AG04450 (cell line): ENCODE measurements at regions of chr17 and their contacts with region 1.

Region 1: GRCh38 chr17:57243171-57243948 is 13.0 kb upstream of the MSI2 start:
- DNase-seq: peak; percentile 21
- H3K4me3 ChIP-seq: no peak overlapping the region
- H3K27ac ChIP-seq: no peak overlapping the region
- H3K27me3 ChIP-seq: peaks cover 17% of the 10 kb centered on the region
- CTCF ChIP-seq: peak; percentile 100

Region 2: DNA sequence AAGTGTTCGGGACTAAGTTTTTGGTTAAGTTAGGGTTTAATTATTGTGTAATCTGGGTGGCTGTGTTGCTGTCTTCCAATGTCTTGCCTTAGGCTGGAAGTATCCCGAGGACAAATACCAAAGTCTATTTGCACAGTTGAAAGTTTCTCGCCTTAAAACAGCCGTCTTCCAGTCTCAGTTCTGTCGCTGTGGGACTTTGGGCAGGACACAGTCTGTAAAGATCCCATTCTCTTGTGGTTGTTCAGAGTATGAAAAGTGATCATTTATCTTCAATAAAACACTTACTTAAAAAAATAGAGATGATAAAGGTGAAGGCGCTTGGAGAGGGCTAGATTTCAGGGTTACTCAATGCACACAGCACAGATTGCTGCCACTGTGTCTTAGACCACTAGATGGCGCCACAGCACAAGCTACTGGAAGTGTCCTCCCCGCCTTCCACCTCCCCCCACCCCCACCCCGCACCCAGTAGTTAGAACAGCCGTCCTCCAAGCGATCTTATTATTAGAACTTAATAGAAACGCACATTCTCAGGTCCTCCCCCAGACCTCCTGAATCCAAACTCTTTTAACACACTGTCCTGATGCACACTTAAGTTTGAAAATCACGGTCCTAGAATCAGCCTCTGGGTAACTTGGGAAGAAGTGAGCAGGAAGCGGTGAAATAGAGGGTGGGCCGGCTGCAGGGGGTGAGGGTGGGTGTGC is 112.4 kb before region 1 on chr17:
- CTCF ChIA-PET with region 1: interaction called, 11 read pairs
- POLR2A ChIA-PET with region 1: no interaction called
- DNase-seq: peak; percentile 46
- H3K4me3 ChIP-seq: peak overlapping the region; percentile 43
- H3K27ac ChIP-seq: no peak overlapping the region
- H3K27me3 ChIP-seq: peaks cover 8% of the 10 kb centered on the region
- CTCF ChIP-seq: peak; percentile 82

Region 3: GRCh38 chr17:57164829-57165228 is 78.5 kb before region 1 on chr17:
- CTCF ChIA-PET with region 1: no interaction called
- POLR2A ChIA-PET with region 1: no interaction called
- DNase-seq: no peak
- H3K4me3 ChIP-seq: no peak overlapping the region
- H3K27ac ChIP-seq: no peak overlapping the region
- H3K27me3 ChIP-seq: no peaks in the 10 kb centered on the region
- CTCF ChIP-seq: no peak

Region 4: GRCh38 chr17:57292091-57292490 is 48.7 kb after region 1 on chr17:
- CTCF ChIA-PET with region 1: no interaction called
- POLR2A ChIA-PET with region 1: no interaction called
- DNase-seq: no peak
- H3K4me3 ChIP-seq: no peak overlapping the region
- H3K27ac ChIP-seq: no peak overlapping the region
- H3K27me3 ChIP-seq: no peaks in the 10 kb centered on the region
- CTCF ChIP-seq: no peak

Region 5: GRCh38 chr17:57552114-57552624 is 308.8 kb after region 1 on chr17:
- CTCF ChIA-PET with region 1: interaction called, 36 read pairs
- POLR2A ChIA-PET with region 1: no interaction called
- DNase-seq: no peak
- H3K4me3 ChIP-seq: no peak overlapping the region
- H3K27ac ChIP-seq: no peak overlapping the region
- H3K27me3 ChIP-seq: no peaks in the 10 kb centered on the region
- CTCF ChIP-seq: peak; percentile 63

Region 6: DNA sequence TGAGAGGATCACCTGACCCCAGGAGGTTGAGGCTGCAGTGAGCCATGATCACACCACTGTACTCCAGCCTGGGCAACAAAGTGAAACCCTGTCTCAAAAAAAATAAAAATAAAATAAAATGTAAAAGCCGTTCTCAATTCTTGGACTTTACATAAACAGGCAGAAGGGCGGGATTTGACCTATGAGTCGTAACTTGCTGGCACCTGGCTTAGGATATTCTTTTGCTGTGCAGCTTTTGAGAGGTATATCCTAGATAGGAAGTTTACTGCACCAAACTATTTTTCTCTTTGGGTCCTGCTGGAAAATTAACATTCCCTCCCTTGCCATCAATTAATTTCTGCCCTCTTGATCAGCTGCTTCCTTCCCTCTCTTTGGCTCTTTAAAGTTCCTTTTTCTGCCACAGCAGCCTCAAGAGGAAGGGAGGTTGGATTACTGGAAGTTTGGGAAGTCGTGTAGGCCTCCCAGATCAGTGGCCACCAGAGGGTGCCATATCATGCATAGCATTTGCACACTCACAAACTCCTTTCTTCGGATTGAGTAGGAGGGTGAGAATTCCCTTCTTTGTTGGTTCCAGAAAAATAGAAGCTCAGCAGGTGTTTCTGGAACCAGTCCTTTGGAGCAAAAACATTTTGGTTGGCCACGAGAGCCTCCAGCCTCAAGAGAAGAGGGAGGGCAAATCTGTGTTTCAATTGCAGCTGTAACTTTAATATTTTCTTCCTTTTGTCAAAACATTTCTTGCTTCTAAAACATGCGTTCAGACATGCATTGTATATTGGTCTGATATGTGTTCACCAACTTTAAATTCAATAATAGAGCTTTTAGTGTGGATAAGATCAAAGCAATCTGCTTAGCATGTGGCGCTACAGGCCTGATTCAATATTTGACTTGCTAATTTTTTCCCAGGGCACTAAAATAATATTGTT is 354.4 kb after region 1 on chr17:
- CTCF ChIA-PET with region 1: interaction called, 70 read pairs
- POLR2A ChIA-PET with region 1: interaction called, 3 read pairs
- DNase-seq: no peak
- H3K4me3 ChIP-seq: no peak overlapping the region
- H3K27ac ChIP-seq: peak overlapping the region; percentile 39
- H3K27me3 ChIP-seq: no peaks in the 10 kb centered on the region
- CTCF ChIP-seq: peak; percentile 96

Region 7: GRCh38 chr17:57671667-57672632 is 428.6 kb after region 1 on chr17:
- CTCF ChIA-PET with region 1: interaction called, 126 read pairs
- POLR2A ChIA-PET with region 1: no interaction called
- DNase-seq: peak; percentile 34
- H3K4me3 ChIP-seq: no peak overlapping the region
- H3K27ac ChIP-seq: no peak overlapping the region
- H3K27me3 ChIP-seq: no peaks in the 10 kb centered on the region
- CTCF ChIP-seq: peak; percentile 98

Region 8: DNA sequence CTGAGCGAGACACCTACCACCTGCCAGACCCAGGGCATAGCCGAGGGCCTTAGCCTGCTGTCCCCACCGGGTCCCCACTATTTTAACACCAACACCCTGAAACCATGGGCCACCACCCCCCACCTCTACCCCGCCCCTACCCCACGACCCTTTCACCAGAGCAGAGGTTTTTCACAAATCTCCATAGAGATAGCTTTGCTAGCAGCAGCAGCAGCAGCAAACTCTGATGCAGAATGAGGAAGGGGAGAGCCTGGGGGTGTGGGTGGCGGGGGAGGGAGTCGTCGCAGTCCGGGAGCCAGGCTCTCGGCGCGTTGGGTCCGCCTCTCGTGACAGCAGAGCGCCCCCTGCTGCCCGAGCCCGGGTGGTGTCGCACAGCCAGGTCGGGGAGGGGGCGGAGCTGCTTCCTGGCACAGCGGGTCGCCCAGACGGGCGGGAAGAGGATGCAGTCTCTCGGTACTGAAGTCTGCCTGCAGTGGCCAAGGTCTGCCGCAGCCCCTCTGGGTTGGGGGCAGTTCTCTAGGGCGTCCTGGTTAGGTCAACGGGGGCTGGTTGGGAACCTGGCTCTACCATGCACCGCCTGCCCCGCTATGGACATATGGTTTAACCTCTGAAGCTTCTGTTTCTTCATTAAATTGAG is 539.9 kb after region 1 on chr17:
- CTCF ChIA-PET with region 1: interaction called, 43 read pairs
- POLR2A ChIA-PET with region 1: no interaction called
- DNase-seq: no peak
- H3K4me3 ChIP-seq: no peak overlapping the region
- H3K27ac ChIP-seq: no peak overlapping the region
- H3K27me3 ChIP-seq: peaks cover 34% of the 10 kb centered on the region
- CTCF ChIP-seq: peak; percentile 60